ENCODE measurements at regions of chr16 and their contacts with region 1.

Region 1: GRCh38 chr16:85253084-85253941 is 141.0 kb upstream of the CIBAR2 start:
- DNase-seq: no peak
- H3K4me3 ChIP-seq: no peak overlapping the region
- CTCF ChIP-seq: peak; percentile 97

Region 2: GRCh38 chr16:85159179-85159980 is 93.9 kb before region 1 on chr16:
- CTCF ChIA-PET with region 1: interaction called, 10 read pairs
- POLR2A ChIA-PET with region 1: no interaction called
- DNase-seq: no peak
- H3K4me3 ChIP-seq: no peak overlapping the region
- CTCF ChIP-seq: no peak

Region 3: GRCh38 chr16:85227084-85227945 is 26.0 kb before region 1 on chr16:
- CTCF ChIA-PET with region 1: interaction called, 14 read pairs
- POLR2A ChIA-PET with region 1: no interaction called
- DNase-seq: no peak
- H3K4me3 ChIP-seq: no peak overlapping the region
- CTCF ChIP-seq: no peak

Region 4: GRCh38 chr16:85234310-85235204 is 18.8 kb before region 1 on chr16:
- CTCF ChIA-PET with region 1: interaction called, 199 read pairs
- POLR2A ChIA-PET with region 1: no interaction called
- DNase-seq: no peak
- H3K4me3 ChIP-seq: peak overlapping the region; percentile 46
- CTCF ChIP-seq: no peak

Region 5: DNA sequence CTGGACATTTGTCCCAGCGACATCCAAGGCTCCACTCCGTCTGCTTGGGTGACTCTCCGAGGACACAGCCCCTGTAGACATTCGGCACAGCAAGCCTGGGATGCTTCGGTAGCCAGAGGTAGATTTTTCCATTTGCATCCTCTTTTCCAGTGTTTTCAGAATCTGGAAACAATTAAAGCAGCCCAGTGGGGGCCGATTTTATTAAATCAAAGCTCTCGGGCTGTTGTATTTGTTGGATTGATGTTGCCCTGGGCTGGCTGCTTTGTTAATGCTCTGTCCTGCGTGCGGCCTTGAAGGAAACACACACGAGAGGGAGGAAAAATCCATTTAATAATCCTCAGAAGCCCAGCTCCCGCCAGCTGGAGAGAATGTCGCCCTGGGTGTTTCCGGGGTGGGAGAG is 17.1 kb after region 1 on chr16:
- CTCF ChIA-PET with region 1: interaction called, 116 read pairs
- POLR2A ChIA-PET with region 1: no interaction called
- DNase-seq: no peak
- H3K4me3 ChIP-seq: no peak overlapping the region
- CTCF ChIP-seq: no peak

Region 6: GRCh38 chr16:85275533-85276249 is 22.4 kb after region 1 on chr16:
- CTCF ChIA-PET with region 1: interaction called, 77 read pairs
- POLR2A ChIA-PET with region 1: no interaction called
- DNase-seq: no peak
- H3K4me3 ChIP-seq: no peak overlapping the region
- CTCF ChIP-seq: peak; percentile 96

Region 7: DNA sequence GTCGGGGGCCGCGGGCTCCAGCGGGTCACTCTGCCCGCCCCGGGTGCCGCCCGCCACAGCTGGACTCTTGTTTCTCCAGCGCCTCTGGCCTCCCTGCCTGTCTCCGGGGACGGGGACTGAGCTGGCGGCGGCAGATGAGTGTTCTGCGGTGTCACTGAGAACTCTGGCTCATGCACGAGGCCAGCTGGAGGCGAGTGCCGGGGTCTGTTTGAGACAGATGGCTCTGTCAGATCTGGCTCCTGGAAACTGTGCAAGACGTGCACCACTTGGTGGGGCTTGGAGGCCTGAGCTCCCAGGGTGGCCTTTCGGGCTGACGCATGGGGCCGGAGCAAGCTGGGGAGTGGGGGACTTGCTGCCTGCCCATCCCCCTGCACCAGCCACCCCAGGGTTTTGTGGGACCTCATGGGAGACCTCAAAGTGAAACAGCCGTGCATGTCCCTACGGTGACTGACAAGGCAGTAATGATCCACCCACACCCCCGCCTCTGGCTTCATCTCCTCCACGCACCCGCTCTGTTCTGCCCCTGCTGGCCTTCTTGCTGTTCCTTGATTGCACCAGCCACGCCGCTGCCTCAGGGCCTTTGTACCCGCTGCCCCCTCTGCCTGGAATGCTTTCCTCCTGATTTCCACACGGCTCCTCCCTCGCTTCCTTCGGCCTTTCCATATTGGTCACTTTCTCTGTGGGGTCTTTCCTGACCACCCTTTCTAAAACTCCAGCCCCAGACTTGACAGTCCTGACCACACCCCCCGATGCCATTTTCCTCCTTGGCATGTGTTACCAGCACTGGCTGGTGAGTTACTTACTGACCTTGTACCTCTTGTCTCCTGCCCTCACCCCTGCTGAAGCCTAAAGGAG is 33.9 kb after region 1 on chr16:
- CTCF ChIA-PET with region 1: interaction called, 34 read pairs
- POLR2A ChIA-PET with region 1: no interaction called
- DNase-seq: no peak
- H3K4me3 ChIP-seq: peak overlapping the region; percentile 8; the same call in 1 of the 2 replicates
- CTCF ChIP-seq: peak; percentile 15